OCI-LY7 (cell line): ENCODE measurements at regions of chr2 and their contacts with region 1.

Region 1: GRCh38 chr2:174688079-174688478 is 76.2 kb downstream of the CHRNA1 start:
- DNase-seq: peak; percentile 61
- H3K4me3 ChIP-seq: no peak overlapping the region
- H3K27ac ChIP-seq: no peak overlapping the region
- H3K4me1 ChIP-seq: no peaks in the 10 kb centered on the region
- CTCF ChIP-seq: peak; percentile 88

Region 2: DNA sequence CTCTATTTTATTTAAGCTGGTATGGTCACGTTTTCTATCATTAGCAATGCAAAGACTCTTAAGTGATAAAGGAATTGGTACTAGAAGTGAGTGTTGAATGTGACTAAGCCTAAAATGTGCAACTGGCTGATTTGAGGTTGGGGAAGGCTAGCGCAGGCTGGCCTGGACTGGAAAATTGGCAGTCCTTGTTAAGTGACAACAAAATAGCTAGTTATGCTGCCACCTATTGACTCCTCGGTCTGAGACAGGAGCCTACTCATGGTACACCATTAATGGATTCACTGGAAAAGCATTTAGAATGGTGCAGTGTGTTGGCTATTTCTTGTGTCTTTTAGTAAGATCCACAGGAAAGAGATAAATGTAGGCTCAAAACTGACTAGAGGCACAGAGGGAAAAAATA is 84.8 kb before region 1 on chr2:
- CTCF ChIA-PET with region 1: no interaction called
- POLR2A ChIA-PET with region 1: interaction called, 3 read pairs
- intact Hi-C with region 1: loop called (anchors 2 kb)
- DNase-seq: peak; percentile 74
- H3K4me3 ChIP-seq: no peak overlapping the region
- H3K27ac ChIP-seq: no peak overlapping the region
- H3K4me1 ChIP-seq: peaks cover 79% of the 10 kb centered on the region
- CTCF ChIP-seq: peak; percentile 88

Region 3: GRCh38 chr2:174717273-174717672 is 29.2 kb after region 1 on chr2:
- CTCF ChIA-PET with region 1: no interaction called
- POLR2A ChIA-PET with region 1: no interaction called
- intact Hi-C with region 1: no loop called
- DNase-seq: no peak
- H3K4me3 ChIP-seq: no peak overlapping the region
- H3K27ac ChIP-seq: no peak overlapping the region
- H3K4me1 ChIP-seq: no peaks in the 10 kb centered on the region
- CTCF ChIP-seq: no peak

Region 4: GRCh38 chr2:174764280-174765255 is 76.5 kb after region 1 on chr2 and contains the start of gene CHRNA1:
- CTCF ChIA-PET with region 1: no interaction called
- POLR2A ChIA-PET with region 1: no interaction called
- intact Hi-C with region 1: no loop called
- DNase-seq: no peak
- H3K4me3 ChIP-seq: no peak within 1 kb of the TSS
- H3K27ac ChIP-seq: no peak within 1 kb of the TSS
- H3K4me1 ChIP-seq: no peaks in the 10 kb centered on the region
- CTCF ChIP-seq: no peak
- total RNA-seq, gene CHRNA1: not detected in 2 replicates

Region 5: DNA sequence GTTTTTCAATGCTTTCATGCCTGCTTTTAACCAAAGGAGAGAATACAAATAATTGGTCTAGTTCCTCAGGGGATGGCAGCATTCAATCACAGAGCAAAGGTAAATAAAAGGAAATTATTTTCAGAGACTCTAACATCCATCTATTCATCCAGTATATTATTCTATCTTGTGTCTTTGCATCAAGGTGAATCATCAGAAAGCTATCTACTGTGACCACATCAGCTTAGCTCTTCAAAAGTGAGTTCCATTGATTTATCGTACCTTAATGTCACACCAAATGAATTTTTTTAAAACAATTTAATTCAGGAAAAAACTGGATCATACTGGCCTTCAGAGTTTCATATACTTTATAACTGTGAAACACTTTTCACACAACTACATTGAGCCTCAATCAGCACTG is 251.0 kb after region 1 on chr2:
- CTCF ChIA-PET with region 1: no interaction called
- POLR2A ChIA-PET with region 1: no interaction called
- intact Hi-C with region 1: no loop called
- DNase-seq: no peak
- H3K4me3 ChIP-seq: no peak overlapping the region
- H3K27ac ChIP-seq: no peak overlapping the region
- H3K4me1 ChIP-seq: no peaks in the 10 kb centered on the region
- CTCF ChIP-seq: no peak